Activated T-helper 2 cell treated with anti-CD3 and anti-CD28 coated beads, Interferon-gamma antibody, Interleukin-2, Interleukin-4, amounts not matched to agents 10 μg/mL and 5 μg/mL and 100 μg/mL, durations not matched to agents 14 hours and 24 hours and 36 hours (primary cell): ENCODE measurements at regions of chr16 and their contacts with region 1.

Region 1: GRCh38 chr16:54936979-54937670 is 6.5 kb downstream of the IRX5 start:
- DNase-seq: no peak
- H3K4me3 Mint-ChIP-seq: peak overlapping the region; percentile 21
- H3K27ac Mint-ChIP-seq: no peak overlapping the region
- H3K4me1 Mint-ChIP-seq: peaks cover 4% of the 10 kb centered on the region
- H3K27me3 Mint-ChIP-seq: peaks cover 81% of the 10 kb centered on the region

Region 2: DNA sequence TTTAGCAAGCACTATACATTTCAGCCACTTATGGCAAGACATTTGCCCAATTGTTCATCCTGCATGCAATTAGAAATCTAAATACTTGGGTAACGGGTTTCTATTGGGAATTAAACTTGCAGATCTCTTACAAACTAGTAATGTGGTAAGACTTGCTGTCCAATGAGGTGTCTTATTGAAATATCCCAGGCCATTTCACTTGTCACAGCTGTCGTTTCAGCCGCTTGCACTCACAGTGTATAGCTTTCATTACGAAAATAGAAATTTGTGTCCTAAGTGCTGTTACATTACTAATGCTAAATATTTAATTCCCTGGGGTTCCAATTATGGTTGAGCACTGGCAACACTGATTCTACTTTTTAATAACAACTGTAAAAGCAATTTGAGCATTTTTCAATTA is 46.7 kb before region 1 on chr16:
- intact Hi-C with region 1: no loop called
- DNase-seq: no peak
- H3K4me3 Mint-ChIP-seq: no peak overlapping the region
- H3K27ac Mint-ChIP-seq: no peak overlapping the region
- H3K4me1 Mint-ChIP-seq: no peaks in the 10 kb centered on the region
- H3K27me3 Mint-ChIP-seq: no peaks in the 10 kb centered on the region

Region 3: DNA sequence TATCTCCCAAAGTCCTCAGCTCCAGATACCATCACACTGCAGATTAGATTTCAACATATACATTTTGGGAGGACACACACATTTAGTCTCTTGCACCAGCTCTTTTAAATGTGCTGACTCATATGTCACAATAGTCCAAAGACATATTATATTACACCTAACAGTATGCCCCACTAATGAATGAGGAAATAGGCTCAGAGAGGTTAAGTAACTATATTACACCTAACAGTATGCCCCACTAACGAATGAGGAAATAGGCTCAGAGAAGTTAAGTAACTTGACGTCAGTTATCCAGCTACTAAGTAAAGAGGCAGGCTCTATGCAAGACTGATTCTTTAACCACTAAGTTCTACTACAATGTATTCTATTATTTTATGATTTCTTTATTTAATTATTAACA is 396.6 kb after region 1 on chr16:
- intact Hi-C with region 1: loop called (anchors 2 kb)
- DNase-seq: no peak
- H3K4me3 Mint-ChIP-seq: no peak overlapping the region
- H3K27ac Mint-ChIP-seq: no peak overlapping the region
- H3K4me1 Mint-ChIP-seq: no peaks in the 10 kb centered on the region
- H3K27me3 Mint-ChIP-seq: peaks cover 45% of the 10 kb centered on the region

Region 4: GRCh38 chr16:56191156-56191815 is 1254.2 kb after region 1 on chr16 and contains the start of gene GNAO1:
- intact Hi-C with region 1: loop called (anchors 5 kb)
- DNase-seq: peak; percentile 44
- H3K4me3 Mint-ChIP-seq: peak within 1 kb of the TSS; percentile 69
- H3K27ac Mint-ChIP-seq: no peak within 1 kb of the TSS
- H3K4me1 Mint-ChIP-seq: peaks cover 19% of the 10 kb centered on the region
- H3K27me3 Mint-ChIP-seq: peaks cover 78% of the 10 kb centered on the region
- total RNA-seq, gene GNAO1: 0.57 and 0.83 TPM in 2 replicates